ENCODE measurements at regions of chr10 and their contacts with region 1.

Region 1: GRCh38 chr10:72319416-72320254 is 35.1 kb downstream of the DNAJB12 start:
- DNase-seq: peak in 1 of 2 donors; percentile 95
- H3K4me3 ChIP-seq: peak overlapping the region; percentile 44 to 56
- H3K27ac ChIP-seq: peak overlapping the region; percentile 95
- H3K4me1 ChIP-seq: peaks cover 96% of the 10 kb centered on the region
- H3K27me3 ChIP-seq: no peaks in the 10 kb centered on the region
- CTCF ChIP-seq: peak in 1 of 3 experiments; percentile 4
- POLR2A ChIP-seq: peak in 1 of 2 donors; percentile 37

Region 2: GRCh38 chr10:72146071-72146470 is 173.6 kb before region 1 on chr10:
- intact Hi-C with region 1: no loop called
- DNase-seq: no peak
- H3K4me3 ChIP-seq: no peak overlapping the region
- H3K27ac ChIP-seq: no peak overlapping the region
- H3K4me1 ChIP-seq: no peaks in the 10 kb centered on the region
- H3K27me3 ChIP-seq: no peaks in the 10 kb centered on the region
- CTCF ChIP-seq: no peak
- POLR2A ChIP-seq: no peak

Region 3: GRCh38 chr10:72260588-72261322 is 58.9 kb before region 1 on chr10:
- intact Hi-C with region 1: loop called (anchors 5 kb)
- DNase-seq: peak in 1 of 2 donors; percentile 96
- H3K4me3 ChIP-seq: peak overlapping the region; percentile 47 to 58
- H3K27ac ChIP-seq: peak overlapping the region; percentile 98
- H3K4me1 ChIP-seq: peaks cover 78% of the 10 kb centered on the region
- H3K27me3 ChIP-seq: no peaks in the 10 kb centered on the region
- CTCF ChIP-seq: no peak
- POLR2A ChIP-seq: peak in 1 of 2 donors; percentile 29

Region 4: GRCh38 chr10:72273410-72274212 is 46.0 kb before region 1 on chr10 and contains the start of gene DDIT4:
- intact Hi-C with region 1: loop called (anchors 5 kb)
- DNase-seq: peak in 1 of 2 donors; percentile 100
- H3K4me3 ChIP-seq: peak within 1 kb of the TSS; percentile 90 to 99
- H3K27ac ChIP-seq: peak within 1 kb of the TSS; percentile 99
- H3K4me1 ChIP-seq: peaks cover 34% of the 10 kb centered on the region
- H3K27me3 ChIP-seq: no peaks in the 10 kb centered on the region
- CTCF ChIP-seq: no peak
- POLR2A ChIP-seq: peak; percentile 99 to 100
- total RNA-seq, gene DDIT4: 1,063 TPM

Region 5: GRCh38 chr10:72740528-72740927 is 420.9 kb after region 1 on chr10:
- intact Hi-C with region 1: no loop called
- DNase-seq: no peak
- H3K4me3 ChIP-seq: no peak overlapping the region
- H3K27ac ChIP-seq: no peak overlapping the region
- H3K4me1 ChIP-seq: peaks cover 40% of the 10 kb centered on the region
- H3K27me3 ChIP-seq: no peaks in the 10 kb centered on the region
- CTCF ChIP-seq: no peak
- POLR2A ChIP-seq: no peak